GM12878 (cell line): ENCODE measurements at regions of chr9 and their contacts with region 1.

Region 1: DNA sequence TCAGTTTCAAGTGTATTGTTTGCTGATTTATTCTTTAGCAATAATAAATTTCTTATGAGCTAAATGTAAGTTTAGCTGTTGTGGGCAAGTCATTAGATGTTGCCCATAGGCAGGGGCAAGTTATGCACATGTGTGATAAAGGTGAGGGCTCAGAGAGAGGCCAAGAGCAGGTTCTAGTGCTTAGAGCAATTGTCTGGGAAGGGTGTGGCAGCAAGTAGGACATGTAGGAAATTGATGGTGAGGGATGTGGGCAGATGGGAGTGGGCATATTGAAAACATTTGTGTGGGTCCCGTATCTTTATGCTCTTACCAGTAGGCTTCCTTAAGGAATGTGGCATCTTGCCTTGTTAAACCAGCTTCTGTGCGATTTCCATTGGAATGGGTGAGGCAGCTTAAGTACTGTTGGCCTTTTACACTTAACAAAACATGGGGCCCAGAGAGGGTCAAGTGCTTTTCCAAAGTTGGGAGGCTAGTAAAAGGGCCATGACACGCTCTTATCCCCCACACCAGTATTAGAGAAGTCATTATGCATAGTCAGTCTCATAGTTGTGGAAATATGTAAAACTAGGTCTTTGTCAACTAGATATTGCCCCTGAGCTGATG is 60.6 kb downstream of the KDM4C start:
- DNase-seq: no peak
- ATAC-seq: no peak
- H3K4me3 ChIP-seq: no peak overlapping the region
- H3K27ac ChIP-seq: no peak overlapping the region
- H3K4me1 ChIP-seq: no peaks in the 10 kb centered on the region
- H3K27me3 ChIP-seq: no peaks in the 10 kb centered on the region
- CTCF ChIP-seq: no peak
- EP300 ChIP-seq: no peak
- POLR2A ChIP-seq: no peak
- RAD21 ChIP-seq: no peak

Region 2: GRCh38 chr9:6149315-6149714 is 669.1 kb before region 1 on chr9:
- CTCF ChIA-PET with region 1: no interaction called
- POLR2A ChIA-PET with region 1: no interaction called
- RAD21 ChIA-PET with region 1: no interaction called
- SMC1A ChIA-PET with region 1: no interaction called
- in situ Hi-C with region 1: no loop called
- intact Hi-C with region 1: no loop called
- DNase-seq: no peak
- ATAC-seq: no peak
- H3K4me3 ChIP-seq: no peak overlapping the region
- H3K27ac ChIP-seq: no peak overlapping the region
- H3K4me1 ChIP-seq: no peaks in the 10 kb centered on the region
- H3K27me3 ChIP-seq: no peaks in the 10 kb centered on the region
- CTCF ChIP-seq: no peak
- EP300 ChIP-seq: no peak
- POLR2A ChIP-seq: no peak
- RAD21 ChIP-seq: no peak

Region 3: GRCh38 chr9:6383551-6384225 is 434.7 kb before region 1 on chr9:
- CTCF ChIA-PET with region 1: no interaction called
- POLR2A ChIA-PET with region 1: no interaction called
- RAD21 ChIA-PET with region 1: no interaction called
- SMC1A ChIA-PET with region 1: no interaction called
- in situ Hi-C with region 1: no loop called
- intact Hi-C with region 1: no loop called
- DNase-seq: no peak
- ATAC-seq: no peak
- H3K4me3 ChIP-seq: no peak overlapping the region
- H3K27ac ChIP-seq: no peak overlapping the region
- H3K4me1 ChIP-seq: no peaks in the 10 kb centered on the region
- H3K27me3 ChIP-seq: no peaks in the 10 kb centered on the region
- CTCF ChIP-seq: no peak
- EP300 ChIP-seq: no peak
- POLR2A ChIP-seq: no peak
- RAD21 ChIP-seq: no peak

Region 4: DNA sequence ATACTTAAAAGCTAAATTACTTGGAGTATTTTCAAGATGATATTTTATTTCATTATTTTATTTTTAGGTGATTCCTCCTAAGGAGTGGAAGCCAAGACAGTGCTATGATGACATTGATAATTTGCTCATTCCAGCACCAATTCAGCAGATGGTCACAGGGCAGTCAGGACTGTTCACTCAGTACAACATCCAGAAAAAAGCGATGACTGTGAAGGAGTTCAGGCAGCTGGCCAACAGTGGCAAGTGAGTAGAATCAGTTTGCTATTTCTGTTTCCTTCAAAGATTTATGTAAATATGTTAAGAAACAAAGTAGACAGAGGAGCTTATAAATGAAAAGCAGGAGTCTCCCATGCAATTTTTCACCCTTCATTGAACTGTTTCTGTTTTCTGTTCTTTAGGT is 12.9 kb before region 1 on chr9:
- CTCF ChIA-PET with region 1: no interaction called
- POLR2A ChIA-PET with region 1: interaction called, 4 read pairs
- RAD21 ChIA-PET with region 1: no interaction called
- SMC1A ChIA-PET with region 1: no interaction called
- in situ Hi-C with region 1: no loop called
- intact Hi-C with region 1: loop called (anchors 2 kb)
- DNase-seq: no peak
- ATAC-seq: no peak
- H3K4me3 ChIP-seq: no peak overlapping the region
- H3K27ac ChIP-seq: no peak overlapping the region
- H3K4me1 ChIP-seq: no peaks in the 10 kb centered on the region
- H3K27me3 ChIP-seq: no peaks in the 10 kb centered on the region
- CTCF ChIP-seq: no peak
- EP300 ChIP-seq: no peak
- POLR2A ChIP-seq: no peak
- RAD21 ChIP-seq: no peak